Transverse colon (tissue), 4 donors: ENCODE measurements at regions of chrX and their contacts with region 1.

Region 1: GRCh38 chrX:24464836-24465531 is at the start of gene PDK3:
- DNase-seq: peak; percentile 92
- H3K4me3 ChIP-seq: peak within 1 kb of the TSS; percentile 64 to 82 (median 77)
- H3K27ac ChIP-seq: peak within 1 kb of the TSS; percentile 85 to 93 (median 89)
- H3K4me1 ChIP-seq: peaks cover 0 to 12% (median 3%) of the 10 kb centered on the region in 4 donors
- H3K27me3 ChIP-seq: no peaks in the 10 kb centered on the region
- CTCF ChIP-seq: no peak
- EP300 ChIP-seq: no peak
- POLR2A ChIP-seq: peak; percentile 70
- total RNA-seq, gene PDK3: 9.4 to 36.8 (median 27.0) TPM

Region 2: GRCh38 chrX:24479924-24480323 is 14.9 kb after region 1 on chrX:
- in situ Hi-C with region 1: no loop called
- intact Hi-C with region 1: loop called (anchors 1 kb)
- DNase-seq: peak; percentile 74
- H3K4me3 ChIP-seq: peak overlapping the region in 1 of 4 donors; percentile 27
- H3K27ac ChIP-seq: peak overlapping the region; percentile 66 to 86 (median 80)
- H3K4me1 ChIP-seq: peaks cover 3 to 36% (median 11%) of the 10 kb centered on the region in 4 donors
- H3K27me3 ChIP-seq: no peaks in the 10 kb centered on the region
- CTCF ChIP-seq: no peak
- EP300 ChIP-seq: no peak
- POLR2A ChIP-seq: peak; percentile 46